Activated naive CD4-positive, alpha-beta T cell treated with anti-CD3 and anti-CD28 coated beads, Interleukin-2, amount 10 ng/mL, durations not matched to agents 7 days and 5 days (primary cell): ENCODE measurements at regions of chr6 and their contacts with region 1.

Region 1: DNA sequence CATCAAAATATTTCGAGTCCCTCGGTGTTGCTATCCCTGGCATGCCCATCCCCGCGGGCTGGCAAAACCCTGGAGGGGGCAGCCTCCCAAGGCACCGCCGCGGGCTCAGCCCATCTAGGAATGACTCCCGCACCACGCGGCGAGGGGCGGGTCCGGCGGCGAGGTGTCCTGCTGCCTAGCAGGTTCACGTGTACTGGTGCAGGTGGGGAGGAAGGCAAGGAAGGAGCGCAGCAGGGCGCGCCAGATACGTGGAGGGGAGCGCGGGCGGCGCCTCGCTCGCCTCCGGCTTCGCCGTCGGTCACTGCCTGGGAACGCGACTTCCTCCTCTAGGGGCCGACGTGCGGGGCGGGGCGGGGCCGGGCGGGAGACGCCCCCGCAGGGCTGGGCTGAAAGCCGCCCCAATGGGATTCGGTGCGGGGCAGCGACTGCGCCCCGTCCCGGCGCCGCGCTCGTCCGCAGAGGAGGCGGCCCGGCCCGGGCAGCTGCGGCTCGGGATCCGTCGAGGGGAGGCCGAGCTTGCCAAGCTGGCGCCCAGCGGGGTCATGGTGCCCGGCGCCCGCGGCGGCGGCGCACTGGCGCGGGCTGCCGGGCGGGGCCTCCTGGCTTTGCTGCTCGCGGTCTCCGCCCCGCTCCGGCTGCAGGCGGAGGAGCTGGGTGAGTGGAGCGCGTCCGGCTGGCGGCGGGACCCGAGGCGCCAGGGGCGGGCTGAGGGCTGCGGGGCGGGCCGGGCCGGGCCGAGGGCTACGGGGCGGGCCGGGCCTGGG is at the start of gene DCBLD1:
- DNase-seq: peak; percentile 78
- H3K4me3 Mint-ChIP-seq: peak within 1 kb of the TSS; percentile 87
- H3K27ac Mint-ChIP-seq: peak within 1 kb of the TSS; percentile 84
- H3K4me1 Mint-ChIP-seq: peaks cover 27% of the 10 kb centered on the region
- H3K27me3 Mint-ChIP-seq: peaks cover 59% of the 10 kb centered on the region

Region 2: DNA sequence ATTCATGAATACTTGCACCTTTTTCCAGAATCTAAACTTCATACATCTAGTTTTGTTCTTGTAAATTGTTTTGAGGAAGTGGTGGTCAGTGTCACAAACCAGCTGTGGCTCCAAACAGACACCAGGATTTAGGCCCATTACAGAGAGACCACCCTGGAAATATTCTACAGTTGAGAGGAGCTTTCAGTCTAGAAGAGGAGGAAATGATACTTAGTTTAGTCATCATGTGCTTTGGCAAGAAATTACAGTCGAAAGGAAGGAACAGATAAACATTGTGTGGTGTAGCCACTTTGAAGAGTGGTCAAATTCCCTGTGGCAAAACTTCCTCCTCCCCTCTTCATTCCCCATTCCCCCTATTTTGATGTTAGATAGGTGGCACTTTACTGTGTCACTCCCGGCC is 15.7 kb after region 1 on chr6:
- CTCF ChIA-PET with region 1: no interaction called
- DNase-seq: no peak
- H3K4me3 Mint-ChIP-seq: no peak overlapping the region
- H3K27ac Mint-ChIP-seq: no peak overlapping the region
- H3K4me1 Mint-ChIP-seq: peaks cover 14% of the 10 kb centered on the region
- H3K27me3 Mint-ChIP-seq: no peaks in the 10 kb centered on the region

Region 3: DNA sequence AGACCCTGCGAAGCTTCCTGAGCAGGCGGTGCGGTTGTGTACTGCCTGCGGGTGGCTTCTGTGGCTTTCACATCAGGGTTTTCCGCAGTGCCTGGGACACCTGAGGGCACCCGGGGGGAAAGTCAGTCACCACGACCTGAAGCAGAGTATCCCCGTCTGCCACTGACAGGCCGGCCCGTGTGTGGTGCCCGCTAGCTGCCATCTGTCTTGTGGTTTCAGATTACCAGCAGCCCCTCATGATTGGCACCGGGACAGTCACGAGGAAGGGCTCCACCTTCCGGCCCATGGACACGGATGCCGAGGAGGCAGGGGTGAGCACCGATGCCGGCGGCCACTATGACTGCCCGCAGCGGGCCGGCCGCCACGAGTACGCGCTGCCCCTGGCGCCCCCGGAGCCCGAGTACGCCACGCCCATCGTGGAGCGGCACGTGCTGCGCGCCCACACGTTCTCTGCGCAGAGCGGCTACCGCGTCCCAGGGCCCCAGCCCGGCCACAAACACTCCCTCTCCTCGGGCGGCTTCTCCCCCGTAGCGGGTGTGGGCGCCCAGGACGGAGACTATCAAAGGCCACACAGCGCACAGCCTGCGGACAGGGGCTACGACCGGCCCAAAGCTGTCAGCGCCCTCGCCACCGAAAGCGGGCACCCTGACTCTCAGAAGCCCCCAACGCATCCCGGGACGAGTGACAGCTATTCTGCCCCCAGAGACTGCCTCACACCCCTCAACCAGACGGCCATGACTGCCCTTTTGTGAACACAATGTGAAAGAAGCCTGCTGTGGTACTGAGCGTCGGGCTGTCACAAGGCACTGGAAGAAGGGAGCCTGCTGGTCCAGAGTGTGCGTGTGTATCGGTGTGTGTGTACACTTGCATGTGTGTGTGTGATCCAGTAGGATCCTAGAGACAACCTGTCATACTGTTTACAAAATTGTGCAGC is 65.5 kb after region 1 on chr6:
- CTCF ChIA-PET with region 1: interaction called, 55 read pairs
- DNase-seq: peak; percentile 70
- H3K4me3 Mint-ChIP-seq: peak overlapping the region; percentile 74
- H3K27ac Mint-ChIP-seq: peak overlapping the region; percentile 97
- H3K4me1 Mint-ChIP-seq: peaks cover 44% of the 10 kb centered on the region
- H3K27me3 Mint-ChIP-seq: peaks cover 9% of the 10 kb centered on the region

Region 4: DNA sequence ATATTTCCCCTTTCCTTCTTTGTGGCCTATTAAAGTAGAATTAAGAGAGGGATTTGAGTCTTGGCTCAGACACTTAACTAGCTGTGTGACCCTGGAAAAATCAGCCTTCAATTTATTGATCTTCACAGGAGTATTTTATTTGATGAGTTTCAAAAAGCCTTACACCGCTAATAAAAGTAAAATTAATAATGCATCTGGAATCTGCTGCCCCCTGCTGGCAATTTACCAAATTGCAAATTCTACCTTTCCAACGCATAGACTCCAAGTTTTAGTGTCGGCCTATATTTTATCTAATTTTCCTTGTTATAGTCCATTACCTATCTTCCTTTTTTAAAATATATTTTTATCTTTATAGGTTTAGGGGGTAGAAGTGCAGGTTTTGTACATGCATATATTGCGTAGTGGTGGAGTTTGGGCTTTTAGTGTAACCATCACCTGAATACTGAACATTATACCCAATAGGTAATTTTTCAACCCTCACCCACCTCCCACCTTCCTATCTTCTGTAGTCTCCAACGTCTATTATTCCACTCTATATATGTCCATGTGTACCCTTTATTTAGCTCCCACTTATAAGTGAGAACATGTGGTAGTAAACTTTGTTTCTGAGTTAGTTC is 73.6 kb after region 1 on chr6:
- CTCF ChIA-PET with region 1: interaction called, 62 read pairs
- DNase-seq: peak; percentile 64
- H3K4me3 Mint-ChIP-seq: no peak overlapping the region
- H3K27ac Mint-ChIP-seq: no peak overlapping the region
- H3K4me1 Mint-ChIP-seq: peaks cover 1% of the 10 kb centered on the region
- H3K27me3 Mint-ChIP-seq: peaks cover 3% of the 10 kb centered on the region